IMR-90 (cell line): ENCODE measurements at regions of chr1 and their contacts with region 1.

Region 1: DNA sequence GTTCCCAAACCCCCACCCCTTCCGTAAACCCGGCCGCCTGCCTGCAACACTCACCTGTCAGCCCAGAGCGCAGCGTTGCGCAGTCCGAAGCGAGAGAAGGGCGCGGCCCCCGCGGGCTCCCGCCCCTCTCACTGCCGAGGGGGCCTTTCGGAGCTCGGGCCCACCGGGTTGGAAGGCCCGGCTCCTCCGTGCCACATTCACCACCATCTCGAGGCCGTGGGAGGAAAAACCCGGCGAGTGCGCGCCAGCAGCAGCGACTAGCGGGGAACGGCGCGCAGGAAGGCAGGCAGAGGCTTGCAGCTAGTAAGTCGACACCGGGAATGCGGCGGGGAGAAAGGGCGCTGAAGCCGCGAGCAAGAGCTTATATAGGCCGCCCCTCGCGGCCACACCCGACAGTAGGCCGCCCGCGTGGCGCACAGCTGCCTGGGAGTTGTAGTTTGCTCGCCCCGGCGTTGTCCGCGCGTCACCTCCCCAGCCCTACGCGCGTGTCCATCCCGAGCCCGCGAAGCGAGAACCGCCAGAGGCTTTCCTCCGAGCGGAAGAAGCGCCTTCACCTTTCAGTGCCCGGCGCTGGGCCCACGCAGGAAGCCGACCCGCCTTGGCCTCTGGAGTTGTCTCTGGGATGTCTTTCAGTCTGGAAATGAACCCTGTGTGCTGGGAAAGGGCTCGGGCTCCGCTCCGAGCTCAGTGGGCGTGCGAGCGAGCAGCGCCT is 10.4 kb upstream of the RAB42 start:
- DNase-seq: peak; percentile 94
- ATAC-seq: peak; percentile 95
- H3K4me3 ChIP-seq: peak overlapping the region; percentile 79
- H3K27ac ChIP-seq: peak overlapping the region; percentile 75
- H3K4me1 ChIP-seq: peaks cover 6% of the 10 kb centered on the region; the same call in 1 of the 2 replicates
- H3K27me3 ChIP-seq: no peaks in the 10 kb centered on the region
- CTCF ChIP-seq: no peak
- POLR2A ChIP-seq: peak; percentile 100
- RAD21 ChIP-seq: no peak; the same call in 1 of the 2 replicates

Region 2: DNA sequence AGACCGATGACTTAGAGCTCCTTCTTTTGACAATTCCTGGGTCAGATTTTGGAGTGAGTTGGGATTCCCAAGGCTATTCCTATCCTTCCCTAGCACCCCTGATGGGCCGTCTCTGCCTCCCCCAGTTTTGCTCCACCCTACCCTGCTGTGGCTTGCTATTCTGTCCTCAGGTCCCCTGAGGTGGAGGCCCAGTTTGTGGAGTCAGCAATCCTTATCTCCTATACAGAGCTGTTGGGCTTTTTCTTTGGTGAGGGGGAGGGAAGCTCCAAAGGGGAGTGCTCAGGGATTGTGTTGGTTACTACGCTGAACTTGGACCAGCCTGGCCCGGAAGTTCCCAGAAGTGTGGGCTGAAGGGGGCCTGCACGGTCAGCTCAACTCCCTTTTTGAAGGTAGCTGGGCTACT is 314.8 kb before region 1 on chr1:
- CTCF ChIA-PET with region 1: no interaction called
- POLR2A ChIA-PET with region 1: interaction called, 13 read pairs
- dilution Hi-C with region 1: no loop called
- in situ Hi-C with region 1: no loop called
- intact Hi-C with region 1: no loop called
- DNase-seq: no peak
- ATAC-seq: no peak
- H3K4me3 ChIP-seq: no peak overlapping the region
- H3K27ac ChIP-seq: no peak overlapping the region
- H3K4me1 ChIP-seq: peaks cover 16% of the 10 kb centered on the region
- H3K27me3 ChIP-seq: no peaks in the 10 kb centered on the region
- CTCF ChIP-seq: no peak
- POLR2A ChIP-seq: no peak
- RAD21 ChIP-seq: no peak

Region 3: DNA sequence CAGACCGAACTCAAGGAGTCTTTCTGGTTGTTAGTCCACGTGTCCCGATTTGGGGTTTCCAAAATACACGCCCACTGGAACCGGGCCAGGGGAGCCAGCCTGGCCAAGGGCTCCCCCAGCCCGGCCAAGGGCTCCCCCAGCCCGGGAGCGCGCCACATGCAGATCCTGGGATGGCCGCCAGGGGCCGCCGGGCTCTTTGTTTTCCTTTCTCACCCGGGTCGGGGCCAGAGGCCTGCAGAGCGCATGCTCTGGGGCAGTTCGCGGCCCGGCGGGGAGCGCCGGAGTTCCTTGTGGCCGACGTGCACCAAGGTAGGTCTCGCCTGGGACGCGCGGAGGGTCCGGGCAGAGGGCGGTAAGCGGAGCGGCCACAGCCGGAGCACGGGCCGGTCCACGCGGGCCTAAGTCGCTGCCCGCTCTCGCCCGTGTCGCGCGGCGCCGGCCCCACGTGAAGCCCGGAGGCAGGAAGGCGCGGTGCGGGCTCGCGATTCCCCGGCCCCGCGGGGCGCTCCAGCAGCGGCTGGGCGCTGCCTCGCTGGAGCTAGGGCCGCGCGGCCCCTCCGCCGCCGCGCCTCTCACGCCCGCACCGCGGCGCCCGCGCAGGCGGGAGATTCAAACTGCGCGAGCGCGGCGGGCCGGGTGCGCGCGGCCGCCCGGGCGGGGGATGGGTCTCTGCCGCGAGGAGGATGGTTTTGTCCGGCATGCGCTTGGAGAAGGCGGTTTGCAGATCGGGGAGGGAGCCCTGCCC is 63.5 kb before region 1 on chr1:
- CTCF ChIA-PET with region 1: no interaction called
- POLR2A ChIA-PET with region 1: interaction called, 6 read pairs
- dilution Hi-C with region 1: no loop called
- in situ Hi-C with region 1: no loop called
- intact Hi-C with region 1: loop called (anchors 5 kb)
- DNase-seq: peak; percentile 81
- ATAC-seq: peak; percentile 86
- H3K4me3 ChIP-seq: peak overlapping the region; percentile 78
- H3K27ac ChIP-seq: peak overlapping the region; percentile 76
- H3K4me1 ChIP-seq: peaks cover 9% of the 10 kb centered on the region
- H3K27me3 ChIP-seq: no peaks in the 10 kb centered on the region
- CTCF ChIP-seq: peak; percentile 91
- POLR2A ChIP-seq: no peak; the same call in 1 of the 2 replicates
- RAD21 ChIP-seq: peak; percentile 72

Region 4: DNA sequence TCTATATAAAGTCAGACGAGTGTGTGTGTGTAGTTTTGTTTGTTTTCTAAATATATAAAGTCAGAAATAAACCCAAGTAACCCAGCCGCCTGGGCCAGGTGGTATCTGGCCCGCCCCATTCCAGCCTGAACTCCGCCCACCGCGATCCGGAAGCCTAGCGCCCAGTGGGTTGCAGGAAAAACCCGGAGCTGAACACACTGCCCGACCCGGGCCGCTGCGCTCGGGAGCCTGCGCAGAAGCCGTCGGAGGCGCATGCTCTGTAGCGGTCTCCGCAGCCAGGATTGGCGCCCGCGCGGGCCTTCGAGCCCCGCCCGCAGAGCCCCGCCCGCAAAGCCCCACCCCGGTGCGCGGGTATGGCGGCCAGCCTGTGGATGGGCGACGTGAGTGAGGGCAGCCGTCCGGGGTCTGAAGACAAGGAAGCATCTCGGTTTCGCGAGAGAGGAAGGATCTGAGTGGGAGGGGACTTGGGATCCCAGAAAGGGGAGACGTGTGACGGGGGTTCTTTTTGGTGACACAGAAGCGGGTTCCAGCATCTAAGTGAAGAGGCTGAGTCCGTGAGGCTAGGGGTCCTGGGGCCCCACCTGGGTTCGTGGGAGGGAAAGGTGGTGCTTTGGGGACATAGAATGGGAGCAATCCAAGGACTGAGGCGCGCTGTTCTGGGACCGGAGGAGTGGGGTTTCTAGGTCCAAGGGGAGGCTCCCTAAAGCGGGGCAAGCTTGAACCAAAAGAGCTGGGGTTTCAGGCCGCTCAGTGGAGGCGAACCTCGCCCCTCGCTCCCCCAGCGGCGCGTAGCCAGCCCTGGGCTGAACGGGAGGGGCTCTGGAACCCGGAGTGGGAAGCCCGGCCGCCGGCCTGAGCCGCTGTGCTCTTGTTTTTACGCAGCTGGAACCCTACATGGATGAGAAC is 28.7 kb before region 1 on chr1 and contains the start of gene TRNAU1AP:
- CTCF ChIA-PET with region 1: interaction called, 5 read pairs
- POLR2A ChIA-PET with region 1: interaction called, 9 read pairs
- dilution Hi-C with region 1: no loop called
- in situ Hi-C with region 1: no loop called
- intact Hi-C with region 1: loop called (anchors 1 kb)
- DNase-seq: peak; percentile 95
- ATAC-seq: peak; percentile 98
- H3K4me3 ChIP-seq: peak within 1 kb of the TSS; percentile 85
- H3K27ac ChIP-seq: peak within 1 kb of the TSS; percentile 81
- H3K4me1 ChIP-seq: no peaks in the 10 kb centered on the region
- H3K27me3 ChIP-seq: no peaks in the 10 kb centered on the region
- CTCF ChIP-seq: no peak
- POLR2A ChIP-seq: peak; percentile 41; the same call in 1 of the 2 replicates
- RAD21 ChIP-seq: no peak
- total RNA-seq, gene TRNAU1AP: 23.8 and 25.3 TPM in 2 replicates

Region 5: DNA sequence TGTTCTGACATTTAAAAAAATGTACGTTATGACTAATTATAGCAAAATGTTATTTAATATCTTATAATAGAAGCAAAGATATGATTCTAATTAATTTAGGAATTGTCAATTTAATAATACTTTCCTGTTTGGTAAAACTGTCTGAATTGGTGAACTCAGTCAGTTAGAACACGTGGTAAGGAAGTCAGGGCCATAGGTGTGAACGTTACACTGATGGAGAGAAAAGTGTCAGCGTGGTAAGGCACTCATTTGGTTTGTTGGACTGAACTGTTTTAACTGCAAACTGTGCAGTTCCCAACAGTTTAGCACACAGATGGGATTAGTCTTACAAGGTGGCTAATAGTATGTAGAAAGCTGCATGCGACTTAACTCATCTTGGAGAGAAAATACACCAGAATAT is 435.5 kb after region 1 on chr1:
- CTCF ChIA-PET with region 1: no interaction called
- POLR2A ChIA-PET with region 1: no interaction called
- dilution Hi-C with region 1: no loop called
- in situ Hi-C with region 1: no loop called
- intact Hi-C with region 1: no loop called
- DNase-seq: no peak
- ATAC-seq: no peak
- H3K4me3 ChIP-seq: no peak overlapping the region
- H3K27ac ChIP-seq: no peak overlapping the region
- H3K4me1 ChIP-seq: no peaks in the 10 kb centered on the region
- H3K27me3 ChIP-seq: no peaks in the 10 kb centered on the region
- CTCF ChIP-seq: no peak
- POLR2A ChIP-seq: no peak
- RAD21 ChIP-seq: no peak

Region 6: GRCh38 chr1:29426810-29427209 is 845.1 kb after region 1 on chr1:
- CTCF ChIA-PET with region 1: no interaction called
- POLR2A ChIA-PET with region 1: no interaction called
- dilution Hi-C with region 1: no loop called
- in situ Hi-C with region 1: no loop called
- intact Hi-C with region 1: no loop called
- DNase-seq: no peak
- ATAC-seq: no peak
- H3K4me3 ChIP-seq: no peak overlapping the region
- H3K27ac ChIP-seq: no peak overlapping the region
- H3K4me1 ChIP-seq: no peaks in the 10 kb centered on the region
- H3K27me3 ChIP-seq: 0 out of 2 replicates have a peak, but pooled peaks cover 1% of the 10 kb centered on the region
- CTCF ChIP-seq: no peak
- POLR2A ChIP-seq: no peak
- RAD21 ChIP-seq: no peak